ENCODE measurements at regions of chr7 and their contacts with region 1.

Region 1: DNA sequence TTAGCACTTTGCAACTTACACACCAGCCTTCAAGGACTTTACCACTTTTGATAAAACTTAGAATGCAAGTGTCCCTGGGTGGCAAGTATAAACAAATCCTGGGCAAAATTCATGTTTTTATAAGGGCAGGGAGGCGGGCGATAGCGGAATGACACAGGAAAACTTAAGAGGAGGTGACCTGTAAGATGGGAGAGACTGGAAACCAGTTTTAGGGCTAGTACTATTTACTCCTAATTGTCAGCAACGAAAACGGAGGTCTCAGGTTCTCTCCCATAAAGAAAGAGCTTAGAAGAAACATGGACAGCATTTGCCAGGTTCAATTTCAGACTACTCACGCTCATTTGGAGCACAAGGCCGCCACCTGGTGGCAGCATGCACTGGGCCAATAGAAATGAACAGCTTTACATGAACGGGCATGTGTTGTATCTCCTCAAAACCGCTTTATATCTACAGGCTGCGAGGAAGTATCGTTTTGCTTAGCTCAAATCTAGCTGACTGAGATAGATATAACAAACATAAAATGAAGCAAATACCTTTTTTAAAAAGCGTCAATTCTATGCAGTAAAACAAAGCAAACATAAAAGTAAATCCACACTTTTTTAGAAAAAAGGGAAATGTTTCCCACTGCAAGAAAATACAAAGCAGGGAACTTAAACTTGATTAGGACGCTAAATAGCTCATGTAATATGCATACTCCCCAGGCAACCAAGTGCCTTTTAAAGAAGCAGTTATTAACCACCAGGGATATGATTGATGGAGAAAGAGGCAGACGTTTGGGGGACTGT is 37.6 kb upstream of the SVOPL start:
- DNase-seq: peak; percentile 88
- H3K4me3 Mint-ChIP-seq: no peak overlapping the region
- H3K27ac Mint-ChIP-seq: peak overlapping the region; percentile 41
- H3K4me1 Mint-ChIP-seq: peaks cover 18% of the 10 kb centered on the region
- H3K27me3 Mint-ChIP-seq: no peaks in the 10 kb centered on the region
- CTCF ChIP-seq: peak; percentile 86

Region 2: GRCh38 chr7:137408126-137408525 is 1330.6 kb before region 1 on chr7:
- CTCF ChIA-PET with region 1: no interaction called
- intact Hi-C with region 1: no loop called
- DNase-seq: no peak
- H3K4me3 Mint-ChIP-seq: no peak overlapping the region
- H3K27ac Mint-ChIP-seq: no peak overlapping the region
- H3K4me1 Mint-ChIP-seq: no peaks in the 10 kb centered on the region
- H3K27me3 Mint-ChIP-seq: no peaks in the 10 kb centered on the region
- CTCF ChIP-seq: no peak

Region 3: DNA sequence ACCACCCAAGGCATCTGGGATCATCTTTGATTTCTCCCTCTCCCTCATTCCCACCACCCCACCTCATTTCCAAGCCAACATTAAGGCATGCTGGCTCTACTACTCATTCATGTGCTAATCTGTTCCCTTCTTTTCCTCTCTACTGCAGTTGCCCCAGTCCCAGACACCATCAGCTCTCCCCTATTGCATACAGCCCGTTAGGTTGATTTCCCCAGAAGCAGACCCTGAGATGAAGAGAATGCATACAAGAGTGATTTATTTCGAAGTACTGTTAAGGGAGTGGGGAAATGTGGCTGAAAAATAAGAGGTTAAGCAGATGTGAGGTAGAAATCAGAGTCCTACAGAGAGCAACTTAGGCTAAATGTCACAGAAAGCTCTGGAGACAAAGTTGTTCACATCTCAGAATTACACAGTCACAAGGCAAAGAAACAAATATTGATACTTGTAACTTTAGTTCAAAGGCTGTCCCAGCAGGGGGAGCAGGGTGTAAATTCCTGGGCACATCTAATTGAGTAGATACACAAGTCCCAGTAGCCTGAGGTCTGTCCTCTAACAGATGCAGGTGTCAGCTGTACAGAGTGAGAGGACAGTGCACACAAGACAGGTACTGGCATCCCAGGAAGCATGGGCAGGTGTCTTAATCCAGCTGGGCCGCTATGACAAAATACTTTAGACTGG is 641.5 kb before region 1 on chr7:
- CTCF ChIA-PET with region 1: interaction called, 7 read pairs
- intact Hi-C with region 1: loop called (anchors 1 kb)
- DNase-seq: peak; percentile 52
- H3K4me3 Mint-ChIP-seq: no peak overlapping the region
- H3K27ac Mint-ChIP-seq: no peak overlapping the region
- H3K4me1 Mint-ChIP-seq: no peaks in the 10 kb centered on the region
- H3K27me3 Mint-ChIP-seq: no peaks in the 10 kb centered on the region
- CTCF ChIP-seq: peak; percentile 34

Region 4: GRCh38 chr7:138161600-138162081 is 577.1 kb before region 1 on chr7:
- CTCF ChIA-PET with region 1: interaction called, 39 read pairs
- intact Hi-C with region 1: loop called (anchors 1 kb)
- DNase-seq: peak; percentile 85
- H3K4me3 Mint-ChIP-seq: no peak overlapping the region
- H3K27ac Mint-ChIP-seq: no peak overlapping the region
- H3K4me1 Mint-ChIP-seq: no peaks in the 10 kb centered on the region
- H3K27me3 Mint-ChIP-seq: no peaks in the 10 kb centered on the region
- CTCF ChIP-seq: peak; percentile 71

Region 5: DNA sequence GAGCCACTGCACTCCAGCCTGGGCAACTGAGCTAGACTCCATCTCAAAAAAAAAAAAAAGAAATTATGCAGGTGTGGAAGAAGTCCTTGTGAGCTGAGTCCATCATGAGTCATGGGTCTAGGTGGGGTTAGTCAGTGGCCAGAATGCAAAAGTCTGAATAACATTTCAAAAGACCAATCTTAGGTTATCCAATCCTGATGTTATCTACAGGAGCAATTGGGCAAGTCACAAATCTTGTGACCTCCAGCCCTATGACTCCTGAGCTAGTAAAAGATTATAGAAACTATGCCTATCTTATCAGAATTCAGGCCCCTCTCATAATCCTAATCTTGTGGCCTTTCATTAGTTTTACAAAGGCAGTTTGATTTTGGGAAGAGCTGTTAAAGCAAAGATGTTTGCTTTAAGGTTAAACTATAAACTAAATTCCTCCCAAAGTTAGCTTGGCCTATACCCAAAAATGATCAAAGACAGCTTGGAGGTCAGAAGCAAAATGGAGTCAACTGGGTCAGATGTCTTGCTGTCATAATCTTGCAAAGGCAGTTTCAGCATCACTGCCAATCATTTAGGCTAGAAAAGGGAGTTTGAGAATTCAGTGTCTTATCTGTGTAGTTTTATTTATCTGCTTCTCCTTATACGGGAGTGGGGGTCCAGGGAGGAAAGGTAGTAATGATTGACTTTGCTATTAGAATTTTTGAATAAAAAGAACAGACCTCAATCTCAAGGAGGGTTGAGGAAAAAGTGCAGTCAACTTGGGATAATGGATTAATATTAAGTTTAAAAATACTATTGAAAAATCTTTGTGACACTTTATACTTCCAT is 349.9 kb before region 1 on chr7:
- CTCF ChIA-PET with region 1: no interaction called
- intact Hi-C with region 1: loop called (anchors 10 kb)
- DNase-seq: peak; percentile 36
- H3K4me3 Mint-ChIP-seq: no peak overlapping the region
- H3K27ac Mint-ChIP-seq: peak overlapping the region; percentile 62
- H3K4me1 Mint-ChIP-seq: peaks cover 23% of the 10 kb centered on the region
- H3K27me3 Mint-ChIP-seq: no peaks in the 10 kb centered on the region
- CTCF ChIP-seq: no peak

Region 6: GRCh38 chr7:138459413-138460175 is 279.1 kb before region 1 on chr7:
- CTCF ChIA-PET with region 1: interaction called, 4 read pairs
- intact Hi-C with region 1: loop called (anchors 10 kb)
- DNase-seq: peak; percentile 98
- H3K4me3 Mint-ChIP-seq: peak overlapping the region; percentile 83
- H3K27ac Mint-ChIP-seq: peak overlapping the region; percentile 82
- H3K4me1 Mint-ChIP-seq: peaks cover 15% of the 10 kb centered on the region
- H3K27me3 Mint-ChIP-seq: no peaks in the 10 kb centered on the region
- CTCF ChIP-seq: no peak

Region 7: GRCh38 chr7:138565451-138566114 is 173.2 kb before region 1 on chr7:
- CTCF ChIA-PET with region 1: interaction called, 4 read pairs
- intact Hi-C with region 1: loop called (anchors 5 kb)
- DNase-seq: no peak
- H3K4me3 Mint-ChIP-seq: peak overlapping the region; percentile 70
- H3K27ac Mint-ChIP-seq: peak overlapping the region; percentile 95
- H3K4me1 Mint-ChIP-seq: peaks cover 26% of the 10 kb centered on the region
- H3K27me3 Mint-ChIP-seq: no peaks in the 10 kb centered on the region
- CTCF ChIP-seq: no peak

Measured in Calu3 (cell line).